A673 (cell line): ENCODE measurements at regions of chr6 and their contacts with region 1.

Region 1: GRCh38 chr6:44151348-44152108 is 7.1 kb upstream of the CAPN11 start:
- DNase-seq: peak; percentile 81
- H3K4me3 ChIP-seq: no peak overlapping the region
- H3K27ac ChIP-seq: no peak overlapping the region
- H3K4me1 ChIP-seq: no peaks in the 10 kb centered on the region
- H3K27me3 ChIP-seq: no peaks in the 10 kb centered on the region
- CTCF ChIP-seq: peak; percentile 100

Region 2: DNA sequence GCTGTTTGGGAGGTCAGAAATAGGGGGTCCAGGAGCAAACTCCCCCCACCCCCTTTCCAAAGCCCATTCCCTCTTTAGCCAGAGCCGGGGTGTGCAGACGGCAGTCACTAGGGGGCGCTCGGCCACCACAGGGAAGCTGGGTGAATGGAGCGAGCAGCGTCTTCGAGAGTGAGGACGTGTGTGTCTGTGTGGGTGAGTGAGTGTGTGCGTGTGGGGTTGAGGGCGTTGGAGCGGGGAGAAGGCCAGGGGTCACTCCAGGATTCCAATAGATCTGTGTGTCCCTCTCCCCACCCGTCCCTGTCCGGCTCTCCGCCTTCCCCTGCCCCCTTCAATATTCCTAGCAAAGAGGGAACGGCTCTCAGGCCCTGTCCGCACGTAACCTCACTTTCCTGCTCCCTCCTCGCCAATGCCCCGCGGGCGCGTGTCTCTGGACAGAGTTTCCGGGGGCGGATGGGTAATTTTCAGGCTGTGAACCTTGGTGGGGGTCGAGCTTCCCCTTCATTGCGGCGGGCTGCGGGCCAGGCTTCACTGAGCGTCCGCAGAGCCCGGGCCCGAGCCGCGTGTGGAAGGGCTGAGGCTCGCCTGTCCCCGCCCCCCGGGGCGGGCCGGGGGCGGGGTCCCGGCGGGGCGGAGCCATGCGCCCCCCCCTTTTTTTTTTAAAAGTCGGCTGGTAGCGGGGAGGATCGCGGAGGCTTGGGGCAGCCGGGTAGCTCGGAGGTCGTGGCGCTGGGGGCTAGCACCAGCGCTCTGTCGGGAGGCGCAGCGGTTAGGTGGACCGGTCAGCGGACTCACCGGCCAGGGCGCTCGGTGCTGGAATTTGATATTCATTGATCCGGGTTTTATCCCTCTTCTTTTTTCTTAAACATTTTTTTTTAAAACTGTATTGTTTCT is 381.8 kb before region 1 on chr6 and contains the start of gene VEGFA:
- CTCF ChIA-PET with region 1: no interaction called
- POLR2A ChIA-PET with region 1: no interaction called
- intact Hi-C with region 1: loop called (anchors 5 kb)
- DNase-seq: peak; percentile 92
- H3K4me3 ChIP-seq: peak within 1 kb of the TSS; percentile 76
- H3K27ac ChIP-seq: peak within 1 kb of the TSS; percentile 98
- H3K4me1 ChIP-seq: peaks cover 3% of the 10 kb centered on the region
- H3K27me3 ChIP-seq: no peaks in the 10 kb centered on the region
- CTCF ChIP-seq: peak; percentile 99
- total RNA-seq, gene VEGFA: 116 and 144 TPM in 2 replicates

Region 3: GRCh38 chr6:43817192-43817591 is 334.3 kb before region 1 on chr6:
- CTCF ChIA-PET with region 1: no interaction called
- POLR2A ChIA-PET with region 1: no interaction called
- intact Hi-C with region 1: no loop called
- DNase-seq: peak; percentile 33
- H3K4me3 ChIP-seq: no peak overlapping the region
- H3K27ac ChIP-seq: no peak overlapping the region
- H3K4me1 ChIP-seq: no peaks in the 10 kb centered on the region
- H3K27me3 ChIP-seq: no peaks in the 10 kb centered on the region
- CTCF ChIP-seq: peak; percentile 28; the same call in 1 of the 2 replicates

Region 4: DNA sequence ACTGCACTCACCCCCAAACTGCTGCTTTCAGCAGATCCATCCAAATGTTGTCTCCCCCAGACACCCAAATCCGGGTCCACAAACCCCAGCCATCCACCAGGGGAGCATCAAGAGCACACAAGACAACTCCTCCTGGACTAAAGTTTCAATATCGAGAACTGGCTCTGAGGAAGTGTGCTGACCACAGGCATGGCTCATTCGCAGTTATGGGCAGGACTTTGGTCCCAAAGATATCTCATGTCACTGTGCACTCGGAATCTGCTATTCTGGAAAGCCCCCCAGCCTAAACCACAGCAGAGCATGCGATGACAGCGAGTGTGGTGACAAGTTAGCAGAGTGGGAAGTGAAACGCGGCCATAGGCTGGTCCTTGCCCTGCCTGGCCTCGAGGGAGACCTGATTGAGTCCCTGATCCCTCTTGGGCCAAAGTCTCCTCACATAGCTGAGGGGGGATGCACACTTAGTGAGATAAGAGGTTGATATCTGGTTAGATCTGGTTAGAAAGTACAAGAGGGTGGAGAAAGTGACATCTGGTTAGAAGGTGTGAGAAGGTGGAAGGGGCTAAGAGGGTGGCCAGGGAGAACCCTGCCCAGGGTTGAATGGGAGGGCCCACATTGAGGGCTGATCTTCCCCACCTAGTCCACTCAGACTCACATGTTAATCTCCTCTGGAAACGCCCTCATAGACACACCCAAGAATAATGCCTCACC is 174.0 kb before region 1 on chr6:
- CTCF ChIA-PET with region 1: no interaction called
- POLR2A ChIA-PET with region 1: no interaction called
- intact Hi-C with region 1: no loop called
- DNase-seq: no peak
- H3K4me3 ChIP-seq: no peak overlapping the region
- H3K27ac ChIP-seq: no peak overlapping the region
- H3K4me1 ChIP-seq: peaks cover 6% of the 10 kb centered on the region
- H3K27me3 ChIP-seq: no peaks in the 10 kb centered on the region
- CTCF ChIP-seq: no peak

Region 5: DNA sequence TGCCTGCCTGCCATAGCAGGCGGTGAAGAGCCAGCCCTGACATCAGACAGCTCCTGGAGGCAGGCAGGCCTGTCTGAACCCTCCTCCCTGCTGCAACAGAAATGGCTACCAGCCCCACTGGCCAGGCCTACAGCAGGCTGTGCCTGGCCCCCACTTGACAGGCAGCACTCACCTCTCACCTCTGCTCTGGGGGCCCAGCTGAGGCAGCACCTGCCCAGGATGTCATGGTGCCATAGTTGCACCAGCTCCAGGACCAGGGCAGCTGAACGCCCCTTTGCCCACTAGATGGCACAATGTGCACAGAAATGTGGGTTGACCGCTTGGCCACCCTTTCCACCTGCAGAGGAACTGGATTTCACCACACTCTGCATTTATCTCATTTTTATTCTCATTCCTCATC is 54.9 kb before region 1 on chr6:
- CTCF ChIA-PET with region 1: no interaction called
- POLR2A ChIA-PET with region 1: no interaction called
- intact Hi-C with region 1: loop called (anchors 1 kb)
- DNase-seq: peak; percentile 58
- H3K4me3 ChIP-seq: no peak overlapping the region
- H3K27ac ChIP-seq: no peak overlapping the region
- H3K4me1 ChIP-seq: no peaks in the 10 kb centered on the region
- H3K27me3 ChIP-seq: no peaks in the 10 kb centered on the region
- CTCF ChIP-seq: peak; percentile 71

Region 6: DNA sequence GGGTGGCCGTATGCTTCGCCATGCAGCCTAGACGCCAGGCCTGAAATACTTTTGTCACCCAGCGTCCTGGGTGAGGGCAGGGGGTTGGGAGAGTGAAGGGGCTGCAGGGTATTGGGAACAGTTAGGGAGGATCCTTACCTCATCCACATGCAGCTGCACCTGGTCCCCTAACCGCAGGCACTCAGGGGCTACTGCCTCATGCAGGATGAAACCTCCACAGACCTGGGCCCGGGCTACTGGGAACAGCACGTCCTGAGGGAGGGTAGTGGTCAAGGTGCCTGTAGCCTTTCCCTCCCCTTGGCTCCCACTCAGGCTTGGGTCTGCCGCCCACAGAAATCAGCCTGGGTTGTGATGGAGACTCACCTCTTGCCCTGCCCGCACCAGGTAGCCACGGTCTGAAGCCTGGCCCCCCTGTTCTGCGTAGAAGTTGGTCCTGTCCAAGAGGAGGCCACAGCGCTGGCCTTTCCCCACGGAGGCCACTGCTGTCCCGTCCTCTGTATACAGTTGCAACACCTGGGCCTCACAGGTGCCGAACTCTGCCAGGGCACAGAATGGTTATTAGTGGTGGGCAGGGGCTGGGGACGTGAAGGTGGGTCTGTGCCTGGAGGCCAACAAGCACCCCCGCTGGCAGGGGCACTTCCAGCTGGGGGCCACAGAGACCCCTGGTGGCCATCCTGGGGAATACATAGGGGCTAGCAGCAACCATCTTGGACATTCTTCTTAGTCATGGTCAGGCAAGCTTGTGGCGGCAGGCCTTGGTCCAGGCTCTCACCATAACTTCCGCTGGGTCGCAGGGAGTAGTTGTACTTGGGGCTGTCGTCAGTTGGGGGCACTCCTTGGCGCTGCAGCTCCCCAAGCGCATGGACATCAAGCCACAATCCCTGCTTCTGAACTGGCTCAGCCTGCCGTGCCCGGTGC is 153.0 kb after region 1 on chr6:
- CTCF ChIA-PET with region 1: no interaction called
- POLR2A ChIA-PET with region 1: no interaction called
- intact Hi-C with region 1: no loop called
- DNase-seq: peak; percentile 51
- H3K4me3 ChIP-seq: no peak overlapping the region
- H3K27ac ChIP-seq: peak overlapping the region; percentile 47
- H3K4me1 ChIP-seq: no peaks in the 10 kb centered on the region
- H3K27me3 ChIP-seq: no peaks in the 10 kb centered on the region
- CTCF ChIP-seq: peak; percentile 86

Region 7: GRCh38 chr6:44855562-44856411 is 704.3 kb after region 1 on chr6:
- CTCF ChIA-PET with region 1: no interaction called
- POLR2A ChIA-PET with region 1: no interaction called
- intact Hi-C with region 1: no loop called
- DNase-seq: peak; percentile 93
- H3K4me3 ChIP-seq: peak overlapping the region; percentile 9
- H3K27ac ChIP-seq: peak overlapping the region; percentile 60
- H3K4me1 ChIP-seq: peaks cover 42% of the 10 kb centered on the region
- H3K27me3 ChIP-seq: no peaks in the 10 kb centered on the region
- CTCF ChIP-seq: no peak